Mammary epithelial cell (primary cell): ENCODE measurements at regions of chrX and their contacts with region 1.

Region 1: DNA sequence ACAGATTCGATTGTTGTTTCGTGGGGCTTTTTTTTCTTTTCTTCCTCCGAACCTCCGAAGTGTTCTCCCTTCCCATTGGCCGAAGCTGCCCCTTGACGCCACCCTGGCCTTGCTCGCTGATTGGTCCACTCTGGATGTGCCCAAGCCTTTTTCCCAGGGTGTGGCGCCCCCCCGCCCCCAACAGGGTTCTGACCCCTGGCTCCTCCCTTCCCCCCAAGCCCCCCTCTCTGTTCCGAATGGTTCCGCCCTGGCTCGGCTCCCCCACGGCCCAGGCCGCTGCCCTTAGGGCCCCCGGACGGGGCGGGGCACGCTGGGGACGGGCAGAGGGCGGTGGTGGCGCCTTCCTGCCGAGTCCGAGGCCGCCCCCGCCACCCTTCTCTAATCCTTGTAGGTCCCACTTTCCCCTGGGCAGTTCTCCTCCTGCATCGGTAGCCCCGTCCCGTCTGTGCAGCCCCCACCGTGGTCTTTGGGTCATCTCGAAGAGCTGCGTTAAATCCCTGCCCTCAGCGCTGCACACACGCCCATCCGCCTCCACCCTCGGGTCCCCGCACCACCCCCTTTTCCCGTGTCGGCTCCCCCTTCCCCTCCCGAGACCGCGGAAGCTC is 25.5 kb downstream of the UTP14A start:
- DNase-seq: peak; percentile 61
- H3K4me3 ChIP-seq: peak overlapping the region; percentile 21 to 64 (median 51)
- H3K27ac ChIP-seq: no peak overlapping the region
- H3K4me1 ChIP-seq: no peaks in the 10 kb centered on the region
- H3K27me3 ChIP-seq: no peaks in the 10 kb centered on the region
- CTCF ChIP-seq: no peak

Region 2: DNA sequence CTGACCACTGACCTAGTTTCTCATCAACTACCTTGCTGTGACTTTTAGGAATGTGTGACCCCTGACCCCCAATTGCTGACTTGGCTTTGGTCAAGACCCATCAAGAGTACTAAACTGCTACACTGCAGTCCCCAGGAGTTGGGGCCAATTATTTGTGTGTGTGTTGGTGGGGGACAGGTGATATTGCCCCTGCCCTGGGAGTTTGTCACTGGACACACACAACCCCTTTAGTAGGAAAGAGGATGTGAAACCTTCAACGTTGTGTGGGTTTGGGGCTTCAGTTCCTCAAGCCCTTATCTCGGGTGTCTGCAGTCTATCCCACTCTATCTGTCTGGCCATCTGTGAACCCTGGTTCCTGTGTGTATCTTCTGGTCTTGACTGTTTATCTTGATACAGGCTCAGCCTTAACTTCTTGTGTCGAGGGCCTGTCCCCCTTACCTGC is 145.3 kb before region 1 on chrX:
- CTCF ChIA-PET with region 1: no interaction called
- dilution Hi-C with region 1: no loop called
- in situ Hi-C with region 1: no loop called
- intact Hi-C with region 1: no loop called
- DNase-seq: no peak
- H3K4me3 ChIP-seq: no peak overlapping the region
- H3K27ac ChIP-seq: no peak overlapping the region
- H3K4me1 ChIP-seq: no peaks in the 10 kb centered on the region
- H3K27me3 ChIP-seq: no peaks in the 10 kb centered on the region
- CTCF ChIP-seq: no peak

Region 3: DNA sequence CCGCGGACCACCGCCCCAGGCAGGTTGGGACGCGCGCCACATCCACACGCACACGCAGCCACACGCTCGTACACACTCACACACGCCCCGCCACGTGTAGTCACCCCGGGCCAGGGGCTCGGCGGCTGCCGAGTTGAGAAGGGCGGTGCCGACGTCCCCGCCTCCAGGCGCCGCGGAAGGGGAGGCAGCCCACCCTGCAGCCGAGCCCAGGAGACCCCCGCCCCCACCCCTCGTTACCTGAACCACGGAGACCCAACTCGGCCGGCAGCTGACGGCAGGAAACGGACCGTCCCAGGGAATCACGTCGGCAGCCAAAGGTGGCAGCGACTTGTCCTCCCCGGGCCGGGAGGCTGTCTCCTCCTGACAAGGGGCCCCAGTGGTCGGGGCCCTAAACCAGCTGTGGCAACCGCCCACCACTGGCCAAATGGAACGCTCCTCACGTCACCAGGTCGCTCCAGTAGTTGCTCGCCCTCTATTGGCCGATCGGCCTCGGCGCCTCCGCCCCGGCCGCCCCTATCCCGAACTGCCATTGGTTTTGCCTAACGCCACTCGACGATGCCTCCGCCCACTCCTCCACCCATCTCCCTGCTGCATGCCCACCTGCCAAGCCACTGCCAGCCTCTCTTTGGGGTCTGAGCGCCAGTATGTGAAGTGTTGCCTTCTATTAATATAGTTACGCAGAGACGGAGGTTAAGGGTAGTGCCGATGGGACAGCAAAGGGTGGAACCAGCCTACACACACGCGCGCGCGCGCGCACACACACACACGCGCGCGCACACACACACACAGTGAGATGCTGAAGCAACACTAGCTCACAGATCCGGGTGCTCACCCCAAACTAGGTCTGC is 87.8 kb before region 1 on chrX and contains the start of gene ZDHHC9:
- CTCF ChIA-PET with region 1: no interaction called
- dilution Hi-C with region 1: no loop called
- in situ Hi-C with region 1: no loop called
- intact Hi-C with region 1: no loop called
- DNase-seq: peak; percentile 78
- H3K4me3 ChIP-seq: peak within 1 kb of the TSS; percentile 55 to 82 (median 66)
- H3K27ac ChIP-seq: peak within 1 kb of the TSS; percentile 34
- H3K4me1 ChIP-seq: peaks cover 3% of the 10 kb centered on the region
- H3K27me3 ChIP-seq: no peaks in the 10 kb centered on the region
- CTCF ChIP-seq: no peak
- total RNA-seq, gene ZDHHC9: 32.0 to 34.4 TPM

Region 4: GRCh38 chrX:129982274-129983251 is 51.0 kb after region 1 on chrX and contains the start of gene BCORL1:
- CTCF ChIA-PET with region 1: no interaction called
- dilution Hi-C with region 1: no loop called
- in situ Hi-C with region 1: no loop called
- intact Hi-C with region 1: loop called (anchors 5 kb)
- DNase-seq: peak; percentile 86
- H3K4me3 ChIP-seq: peak within 1 kb of the TSS in 2 of 3 experiments; percentile 47 to 55
- H3K27ac ChIP-seq: no peak within 1 kb of the TSS
- H3K4me1 ChIP-seq: peaks cover 3% of the 10 kb centered on the region
- H3K27me3 ChIP-seq: no peaks in the 10 kb centered on the region
- CTCF ChIP-seq: no peak
- total RNA-seq, gene BCORL1: 2.2 to 7.2 TPM

Region 5: GRCh38 chrX:130028196-130028595 is 96.7 kb after region 1 on chrX:
- CTCF ChIA-PET with region 1: no interaction called
- dilution Hi-C with region 1: loop called (anchors 5 kb)
- in situ Hi-C with region 1: no loop called
- intact Hi-C with region 1: loop called (anchors 1 kb)
- DNase-seq: peak; percentile 3
- H3K4me3 ChIP-seq: no peak overlapping the region
- H3K27ac ChIP-seq: no peak overlapping the region
- H3K4me1 ChIP-seq: no peaks in the 10 kb centered on the region
- H3K27me3 ChIP-seq: no peaks in the 10 kb centered on the region
- CTCF ChIP-seq: peak; percentile 51 to 64